CD4-positive, alpha-beta T cell (primary cell): ENCODE measurements at regions of chr11 and their contacts with region 1.

Region 1: GRCh38 chr11:1852877-1853276 is at the start of gene LSP1:
- DNase-seq: peak; percentile 68 to 93 (median 82)
- ATAC-seq: peak; percentile 69
- H3K4me3 ChIP-seq: peak within 1 kb of the TSS; percentile 94
- H3K4me3 Mint-ChIP-seq: peak within 1 kb of the TSS; percentile 98
- H3K27ac ChIP-seq: peak within 1 kb of the TSS; percentile 88 to 91
- H3K27ac Mint-ChIP-seq: peak within 1 kb of the TSS; percentile 91
- H3K4me1 ChIP-seq: peaks cover 93% of the 10 kb centered on the region
- H3K4me1 Mint-ChIP-seq: peaks cover 51% of the 10 kb centered on the region
- H3K27me3 ChIP-seq: no peaks in the 10 kb centered on the region
- H3K27me3 Mint-ChIP-seq: no peaks in the 10 kb centered on the region
- CTCF ChIP-seq: no peak
- total RNA-seq, gene LSP1: 228 to 232 TPM

Region 2: DNA sequence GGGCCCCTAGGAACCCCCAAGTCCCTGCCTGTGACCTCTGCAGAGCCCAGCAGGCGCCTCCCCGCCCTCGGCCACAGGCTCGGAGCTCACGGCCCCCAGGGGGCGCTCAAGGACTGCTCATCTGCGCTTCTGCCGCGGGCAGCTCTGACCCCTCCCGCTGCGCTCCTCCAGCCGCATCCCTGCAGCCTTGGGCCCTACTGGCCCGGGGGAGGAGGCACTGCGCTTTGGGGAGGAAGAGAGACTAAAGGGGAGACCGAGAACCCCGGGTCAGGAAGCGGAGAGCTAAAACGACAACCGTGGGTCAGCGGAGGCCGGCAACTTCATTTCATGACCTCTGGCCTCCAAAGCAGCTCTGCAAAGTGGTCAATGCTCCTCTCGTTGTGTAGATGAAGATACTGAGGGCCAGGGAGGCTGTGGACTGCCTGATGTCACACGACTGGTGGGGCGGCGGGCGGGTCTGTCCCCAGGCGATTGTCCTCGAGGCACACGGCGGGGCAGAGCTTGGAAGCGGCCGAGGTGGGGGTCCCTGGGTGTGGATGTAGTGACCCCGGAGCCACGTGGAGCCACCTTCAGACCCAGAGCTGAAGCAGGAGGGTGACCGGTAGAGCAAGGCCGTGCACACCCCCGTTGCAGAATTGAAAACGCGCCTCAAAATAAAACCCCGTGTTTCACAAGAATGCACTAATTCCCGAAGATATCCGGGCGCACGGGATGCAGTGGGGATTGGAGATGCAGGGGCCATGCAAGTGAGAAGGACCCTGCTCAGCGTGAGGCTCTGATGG is 158.6 kb before region 1 on chr11:
- CTCF ChIA-PET with region 1: interaction called, 10 read pairs
- POLR2A ChIA-PET with region 1: no interaction called
- intact Hi-C with region 1: no loop called
- DNase-seq: peak; percentile 55 to 93 (median 78)
- ATAC-seq: peak; percentile 75
- H3K4me3 ChIP-seq: no peak overlapping the region
- H3K4me3 Mint-ChIP-seq: no peak overlapping the region
- H3K27ac ChIP-seq: no peak overlapping the region
- H3K27ac Mint-ChIP-seq: no peak overlapping the region
- H3K4me1 ChIP-seq: peaks cover 15% of the 10 kb centered on the region
- H3K4me1 Mint-ChIP-seq: peaks cover 3% of the 10 kb centered on the region
- H3K27me3 ChIP-seq: peaks cover 10 to 28% of the 10 kb centered on the region in 2 experiments
- H3K27me3 Mint-ChIP-seq: peaks cover 8% of the 10 kb centered on the region
- CTCF ChIP-seq: peak; percentile 77

Region 3: GRCh38 chr11:1763796-1764661 is 88.8 kb before region 1 on chr11 and contains the start of gene CTSD:
- CTCF ChIA-PET with region 1: no interaction called
- POLR2A ChIA-PET with region 1: interaction called, 4 read pairs
- intact Hi-C with region 1: loop called in 1 of 2 experiments (anchors 5 kb)
- DNase-seq: peak; percentile 66 to 92 (median 86)
- ATAC-seq: peak; percentile 86
- H3K4me3 ChIP-seq: peak within 1 kb of the TSS; percentile 72
- H3K4me3 Mint-ChIP-seq: peak within 1 kb of the TSS; percentile 95
- H3K27ac ChIP-seq: peak within 1 kb of the TSS; percentile 55 to 65
- H3K27ac Mint-ChIP-seq: peak within 1 kb of the TSS; percentile 81
- H3K4me1 ChIP-seq: peaks cover 54% of the 10 kb centered on the region
- H3K4me1 Mint-ChIP-seq: peaks cover 29% of the 10 kb centered on the region
- H3K27me3 ChIP-seq: peaks cover 0 to 2% of the 10 kb centered on the region in 2 experiments
- H3K27me3 Mint-ChIP-seq: no peaks in the 10 kb centered on the region
- CTCF ChIP-seq: no peak
- total RNA-seq, gene CTSD: 63.3 to 71.3 TPM

Region 4: GRCh38 chr11:1837171-1838076 is 15.5 kb before region 1 on chr11:
- CTCF ChIA-PET with region 1: interaction called, 3 read pairs
- POLR2A ChIA-PET with region 1: interaction called, 15 read pairs
- intact Hi-C with region 1: loop called (anchors 1 kb)
- DNase-seq: peak; percentile 71 to 90 (median 78)
- ATAC-seq: peak; percentile 94
- H3K4me3 ChIP-seq: no peak overlapping the region
- H3K4me3 Mint-ChIP-seq: no peak overlapping the region
- H3K27ac ChIP-seq: no peak overlapping the region
- H3K27ac Mint-ChIP-seq: no peak overlapping the region
- H3K4me1 ChIP-seq: peaks cover 31% of the 10 kb centered on the region
- H3K4me1 Mint-ChIP-seq: peaks cover 10% of the 10 kb centered on the region
- H3K27me3 ChIP-seq: peaks cover 2 to 8% of the 10 kb centered on the region in 2 experiments
- H3K27me3 Mint-ChIP-seq: no peaks in the 10 kb centered on the region
- CTCF ChIP-seq: peak; percentile 95

Region 5: DNA sequence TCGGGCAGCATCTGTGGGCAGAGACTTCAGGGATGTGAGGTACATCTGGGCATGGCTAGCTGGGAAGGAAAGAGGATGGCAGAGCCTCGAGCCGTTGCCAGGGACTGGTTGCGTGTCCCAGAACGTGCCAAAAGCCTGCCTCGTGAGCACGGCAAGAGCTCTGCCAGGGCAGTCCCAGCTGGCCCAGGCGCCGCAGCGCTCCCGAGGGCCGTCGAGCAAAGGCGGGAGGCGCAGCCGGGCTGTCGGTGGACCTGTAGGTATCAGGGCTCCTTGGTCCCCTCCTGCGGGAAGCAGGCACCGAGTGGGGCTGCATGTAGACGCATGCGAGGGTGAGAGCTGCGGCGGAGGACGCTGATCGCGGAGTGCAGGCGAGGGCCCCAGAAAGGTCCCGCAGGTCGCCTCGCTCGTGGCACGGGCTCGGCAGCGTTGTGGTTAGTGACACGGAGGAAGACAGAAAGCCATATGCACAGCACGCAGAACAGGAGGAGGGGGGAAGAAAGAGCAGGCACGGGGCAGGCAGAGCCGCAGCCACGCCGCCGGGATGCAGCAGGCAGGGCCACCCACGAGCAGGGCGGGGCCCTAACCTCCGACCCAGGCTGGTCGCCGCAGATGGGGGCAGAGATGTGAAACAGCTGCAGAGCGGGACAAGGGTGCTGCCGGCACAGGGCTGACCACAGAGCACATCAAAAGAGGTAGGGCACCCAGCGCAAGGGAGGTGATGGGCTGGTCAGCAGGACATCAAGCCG is 18.0 kb after region 1 on chr11:
- CTCF ChIA-PET with region 1: interaction called, 4 read pairs
- POLR2A ChIA-PET with region 1: interaction called, 21 read pairs
- intact Hi-C with region 1: loop called (anchors 2 kb)
- DNase-seq: peak in 13 of 14 experiments; percentile 27 to 82 (median 42)
- ATAC-seq: peak; percentile 90
- H3K4me3 ChIP-seq: peak overlapping the region; percentile 28
- H3K4me3 Mint-ChIP-seq: peak overlapping the region; percentile 70
- H3K27ac ChIP-seq: peak overlapping the region; percentile 22 to 48
- H3K27ac Mint-ChIP-seq: peak overlapping the region; percentile 86
- H3K4me1 ChIP-seq: peaks cover 93% of the 10 kb centered on the region
- H3K4me1 Mint-ChIP-seq: peaks cover 59% of the 10 kb centered on the region
- H3K27me3 ChIP-seq: no peaks in the 10 kb centered on the region
- H3K27me3 Mint-ChIP-seq: no peaks in the 10 kb centered on the region
- CTCF ChIP-seq: no peak

Region 6: DNA sequence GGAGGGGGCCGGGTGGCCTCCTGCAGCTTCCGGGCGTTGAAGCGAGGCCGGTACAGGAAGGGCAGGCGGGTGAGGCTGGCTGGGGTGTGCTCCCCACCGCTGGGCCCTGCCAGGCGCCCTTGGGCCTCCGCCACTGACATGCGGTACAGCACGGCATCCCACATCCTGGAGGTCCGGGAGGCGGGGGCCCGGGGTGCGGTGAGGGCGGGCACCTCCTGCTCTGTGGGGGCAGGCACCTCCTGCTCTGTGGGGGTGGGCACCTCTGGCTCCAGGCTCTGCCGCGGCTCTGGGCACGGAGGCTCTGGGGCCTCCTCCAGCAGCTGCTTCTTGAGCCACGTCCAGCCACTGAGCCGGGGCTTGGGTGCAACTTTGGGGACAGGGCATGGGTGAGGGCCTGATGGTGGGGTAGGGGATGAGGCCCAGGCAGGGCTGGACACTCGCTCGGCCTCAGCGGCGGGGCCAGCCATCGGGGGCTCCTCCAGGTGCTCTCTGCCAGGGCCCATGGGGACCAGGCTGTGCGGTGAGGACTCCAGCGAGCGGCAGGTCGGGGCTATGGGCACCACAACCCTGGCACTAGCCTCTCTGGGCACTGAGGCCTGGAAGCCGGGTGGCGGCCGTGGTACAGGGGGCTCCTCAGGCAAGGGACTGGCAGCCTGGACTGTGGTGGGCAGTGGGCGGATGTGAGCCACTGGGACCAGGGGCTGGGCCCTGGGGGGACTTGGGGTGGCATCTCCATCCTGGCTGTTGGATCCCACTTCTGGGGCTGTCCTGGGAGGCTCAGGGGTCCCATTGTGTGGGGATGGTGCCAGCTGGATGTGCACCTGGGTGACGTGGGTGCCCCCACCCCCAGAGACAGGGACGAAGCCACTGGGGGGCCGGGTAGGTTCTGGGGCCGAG is 36.6 kb after region 1 on chr11:
- CTCF ChIA-PET with region 1: no interaction called
- POLR2A ChIA-PET with region 1: interaction called, 16 read pairs
- intact Hi-C with region 1: loop called (anchors 2 kb)
- DNase-seq: peak; percentile 58 to 92 (median 77)
- ATAC-seq: peak; percentile 95
- H3K4me3 ChIP-seq: peak overlapping the region; percentile 47
- H3K4me3 Mint-ChIP-seq: peak overlapping the region; percentile 82
- H3K27ac ChIP-seq: peak overlapping the region; percentile 62 to 73
- H3K27ac Mint-ChIP-seq: peak overlapping the region; percentile 85
- H3K4me1 ChIP-seq: peaks cover 53% of the 10 kb centered on the region
- H3K4me1 Mint-ChIP-seq: peaks cover 31% of the 10 kb centered on the region
- H3K27me3 ChIP-seq: no peaks in the 10 kb centered on the region
- H3K27me3 Mint-ChIP-seq: no peaks in the 10 kb centered on the region
- CTCF ChIP-seq: no peak